Activated naive CD4-positive, alpha-beta T cell treated with anti-CD3 and anti-CD28 coated beads for 36 hours (primary cell): ENCODE measurements at regions of chr3 and their contacts with region 1.

Region 1: GRCh38 chr3:122514123-122515019 is at the start of gene KPNA1:
- DNase-seq: peak; percentile 86
- H3K4me3 Mint-ChIP-seq: peak within 1 kb of the TSS; percentile 73
- H3K27ac Mint-ChIP-seq: peak within 1 kb of the TSS; percentile 77
- H3K4me1 Mint-ChIP-seq: peaks cover 42% of the 10 kb centered on the region
- H3K27me3 Mint-ChIP-seq: no peaks in the 10 kb centered on the region
- total RNA-seq, gene KPNA1: 45.6 to 45.8 TPM

Region 2: DNA sequence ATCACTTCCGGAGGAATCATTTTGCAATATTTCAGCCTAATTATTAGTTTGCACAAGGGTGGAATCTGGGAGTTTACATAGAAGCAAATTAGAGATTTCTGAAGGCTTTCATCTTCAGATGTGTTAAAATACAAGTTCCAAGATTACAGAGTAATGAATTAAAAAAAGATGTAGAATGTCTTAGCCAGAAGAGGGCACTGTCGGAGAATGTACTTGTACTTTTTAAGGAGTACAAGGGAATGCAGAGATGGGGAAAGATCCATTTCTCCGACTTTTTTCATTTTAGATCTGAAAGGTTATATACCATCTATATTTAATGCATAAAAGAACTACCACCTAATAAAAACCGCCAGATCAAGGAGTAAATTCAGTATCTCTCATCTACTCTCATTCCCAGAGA is 55.4 kb before region 1 on chr3:
- CTCF ChIA-PET with region 1: interaction called, 3 read pairs
- intact Hi-C with region 1: loop called (anchors 2 kb)
- DNase-seq: no peak
- H3K4me3 Mint-ChIP-seq: no peak overlapping the region
- H3K27ac Mint-ChIP-seq: no peak overlapping the region
- H3K4me1 Mint-ChIP-seq: peaks cover 8% of the 10 kb centered on the region
- H3K27me3 Mint-ChIP-seq: no peaks in the 10 kb centered on the region

Region 3: DNA sequence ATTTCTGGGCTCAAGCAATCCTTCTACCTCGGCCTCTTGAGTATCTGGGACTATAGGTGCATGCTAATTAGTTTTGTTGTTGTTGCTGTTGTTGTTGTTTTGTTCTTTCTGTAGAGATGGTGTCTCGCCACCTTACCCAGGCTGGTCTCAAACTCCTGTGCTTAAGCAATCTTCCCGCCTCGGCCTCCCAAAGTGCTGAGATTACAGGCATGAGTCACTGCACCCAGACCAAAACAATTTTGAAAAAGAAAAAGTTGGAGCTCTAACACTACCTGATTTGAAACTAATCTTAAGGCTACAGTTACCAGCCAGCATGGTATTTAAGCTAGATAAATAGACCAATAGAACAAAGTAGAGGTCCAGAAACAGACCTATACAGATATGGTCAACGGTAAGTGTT is 29.4 kb before region 1 on chr3:
- CTCF ChIA-PET with region 1: no interaction called
- intact Hi-C with region 1: loop called (anchors 1 kb)
- DNase-seq: no peak
- H3K4me3 Mint-ChIP-seq: no peak overlapping the region
- H3K27ac Mint-ChIP-seq: no peak overlapping the region
- H3K4me1 Mint-ChIP-seq: peaks cover 66% of the 10 kb centered on the region
- H3K27me3 Mint-ChIP-seq: no peaks in the 10 kb centered on the region

Region 4: GRCh38 chr3:122533931-122534334 is 19.6 kb after region 1 on chr3:
- CTCF ChIA-PET with region 1: no interaction called
- intact Hi-C with region 1: loop called (anchors 1 kb)
- DNase-seq: peak; percentile 77
- H3K4me3 Mint-ChIP-seq: no peak overlapping the region
- H3K27ac Mint-ChIP-seq: peak overlapping the region; percentile 28
- H3K4me1 Mint-ChIP-seq: peaks cover 35% of the 10 kb centered on the region
- H3K27me3 Mint-ChIP-seq: no peaks in the 10 kb centered on the region

Region 5: DNA sequence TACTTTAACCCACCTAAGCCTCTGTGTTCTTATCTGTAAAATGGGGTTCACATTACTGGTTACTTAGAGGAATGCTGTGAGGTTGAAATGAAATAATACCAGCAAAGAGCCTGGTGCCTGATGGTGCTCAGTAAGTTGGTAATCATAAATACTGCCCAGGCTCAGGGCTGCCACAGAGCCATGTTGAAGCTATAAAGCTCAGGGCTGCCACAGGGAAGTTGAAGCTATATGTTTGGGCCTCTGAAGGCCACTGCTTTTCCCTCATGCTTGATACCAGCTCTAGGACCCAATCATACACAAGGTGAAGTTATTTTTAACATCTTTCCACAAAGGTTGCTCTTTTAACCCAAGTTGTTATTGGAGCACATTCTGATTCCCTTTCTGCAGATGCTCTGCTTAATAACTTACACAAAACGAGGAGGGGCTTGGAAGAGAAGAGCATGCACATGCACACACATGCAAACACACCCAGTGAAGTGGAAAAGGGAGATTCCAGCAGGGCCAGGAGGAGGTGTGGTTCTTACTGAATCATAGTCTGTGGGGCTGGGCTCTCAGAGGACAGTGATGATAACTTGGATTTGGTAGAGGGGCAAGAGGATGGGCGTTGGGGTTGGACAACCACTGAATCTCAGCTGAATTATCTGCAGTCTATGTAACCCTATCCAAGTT is 183.7 kb after region 1 on chr3:
- CTCF ChIA-PET with region 1: no interaction called
- intact Hi-C with region 1: no loop called
- DNase-seq: no peak
- H3K4me3 Mint-ChIP-seq: no peak overlapping the region
- H3K27ac Mint-ChIP-seq: no peak overlapping the region
- H3K4me1 Mint-ChIP-seq: peaks cover 7% of the 10 kb centered on the region
- H3K27me3 Mint-ChIP-seq: no peaks in the 10 kb centered on the region

Region 6: GRCh38 chr3:122793568-122794416 is 279.4 kb after region 1 on chr3 and contains the start of gene HSPBAP1:
- CTCF ChIA-PET with region 1: no interaction called
- intact Hi-C with region 1: loop called (anchors 2 kb)
- DNase-seq: peak; percentile 92
- H3K4me3 Mint-ChIP-seq: peak within 1 kb of the TSS; percentile 86
- H3K27ac Mint-ChIP-seq: peak within 1 kb of the TSS; percentile 80
- H3K4me1 Mint-ChIP-seq: peaks cover 30% of the 10 kb centered on the region
- H3K27me3 Mint-ChIP-seq: no peaks in the 10 kb centered on the region
- total RNA-seq, gene HSPBAP1: 3.0 to 3.2 TPM